Activated naive CD4-positive, alpha-beta T cell treated with anti-CD3 and anti-CD28 coated beads for 36 hours (primary cell): ENCODE measurements at regions of chr2 and their contacts with region 1.

Region 1: DNA sequence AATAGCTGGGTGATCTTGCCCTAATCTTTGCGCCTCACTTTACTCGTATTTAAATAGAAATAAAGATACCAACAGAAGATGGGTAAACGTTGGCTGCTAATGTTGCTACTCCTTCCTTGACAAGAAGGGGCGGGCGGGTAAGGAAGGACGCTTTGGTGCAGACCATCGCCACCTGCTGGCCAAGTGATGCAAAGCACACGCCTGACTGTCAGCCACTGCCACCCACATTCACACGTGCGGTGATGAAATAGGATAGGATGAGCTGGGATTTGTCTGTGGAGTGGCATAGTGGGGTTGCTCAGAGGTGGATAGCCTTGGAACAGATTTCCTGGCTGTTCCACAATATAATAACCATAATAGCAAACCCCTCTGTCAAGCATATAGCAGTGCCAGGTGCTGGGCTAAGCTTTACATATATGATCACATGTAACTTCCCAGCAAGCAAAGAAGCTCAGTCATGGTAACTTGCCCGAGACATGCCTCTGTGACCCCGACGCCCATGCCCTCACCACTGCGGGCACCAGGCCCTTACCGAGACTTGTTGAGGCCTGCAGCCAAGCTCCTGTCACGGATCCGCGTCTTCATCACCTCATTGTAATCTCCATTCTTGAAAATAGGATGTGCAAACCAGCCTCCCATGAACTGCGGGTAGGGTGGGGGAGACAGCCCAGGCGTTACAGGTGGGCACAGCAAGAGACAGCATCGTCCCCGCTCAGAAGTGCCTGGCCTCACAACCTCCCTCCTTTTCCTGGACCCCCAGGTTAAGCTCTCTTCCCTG is 39.3 kb downstream of the LCT start:
- DNase-seq: peak; percentile 91
- H3K4me3 Mint-ChIP-seq: no peak overlapping the region
- H3K27ac Mint-ChIP-seq: no peak overlapping the region
- H3K4me1 Mint-ChIP-seq: peaks cover 15% of the 10 kb centered on the region
- H3K27me3 Mint-ChIP-seq: no peaks in the 10 kb centered on the region

Region 2: DNA sequence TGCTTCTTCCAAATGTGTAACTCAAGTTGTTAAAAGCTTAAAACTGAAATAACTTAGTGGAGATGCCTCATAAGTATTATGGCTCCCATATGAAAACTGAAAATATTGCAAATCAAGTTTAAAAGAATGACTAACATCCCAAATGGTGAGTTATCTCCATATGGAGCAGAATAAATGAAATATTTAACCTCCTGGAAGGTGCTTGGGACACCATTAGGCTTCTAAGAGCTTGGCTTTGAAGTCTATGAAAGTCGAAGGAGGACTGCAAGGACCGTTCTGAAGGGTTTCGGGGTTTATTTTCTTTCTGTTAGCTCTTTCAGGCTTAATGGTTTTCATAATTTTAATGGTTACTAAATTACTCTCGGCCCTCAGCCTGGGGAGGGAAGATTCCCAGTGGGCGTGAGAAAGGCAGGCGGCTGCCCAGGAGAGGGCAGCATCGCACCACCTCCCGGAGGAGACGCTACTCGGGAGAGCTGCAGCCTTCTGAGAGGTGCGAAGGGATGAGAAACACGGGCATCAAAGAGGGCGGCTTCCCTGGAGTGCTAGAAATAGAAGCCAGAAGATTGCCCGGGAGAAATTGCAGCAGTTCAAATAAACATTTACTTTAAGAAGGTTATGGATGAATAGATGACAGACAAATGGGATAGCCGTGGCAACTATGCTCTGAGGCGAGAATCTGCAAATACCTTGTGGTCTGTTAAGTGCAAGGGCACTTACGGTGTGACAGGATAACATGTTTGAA is 793.5 kb before region 1 on chr2:
- CTCF ChIA-PET with region 1: interaction called, 9 read pairs
- intact Hi-C with region 1: loop called (anchors 1 kb)
- DNase-seq: peak; percentile 79
- H3K4me3 Mint-ChIP-seq: no peak overlapping the region
- H3K27ac Mint-ChIP-seq: no peak overlapping the region
- H3K4me1 Mint-ChIP-seq: peaks cover 5% of the 10 kb centered on the region
- H3K27me3 Mint-ChIP-seq: peaks cover 12% of the 10 kb centered on the region

Region 3: DNA sequence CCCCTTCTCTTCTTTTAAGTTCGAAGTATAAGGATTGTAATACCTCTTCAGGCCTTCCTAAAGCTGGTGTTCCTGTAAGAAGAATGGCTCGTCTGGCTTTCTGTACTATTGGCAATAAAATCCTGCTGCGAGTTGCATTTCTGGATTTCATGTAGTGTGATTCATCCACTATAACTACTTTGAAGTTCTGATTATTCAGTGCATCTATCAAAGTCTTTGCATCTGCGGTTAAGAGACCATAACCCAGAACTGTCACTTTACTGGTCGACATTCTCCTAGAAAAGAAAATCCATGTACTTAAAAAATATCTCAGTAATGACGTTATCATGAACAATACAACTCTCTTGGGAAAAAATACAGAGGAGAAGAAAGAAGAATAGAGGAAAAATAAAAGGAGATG is 447.7 kb before region 1 on chr2:
- CTCF ChIA-PET with region 1: no interaction called
- intact Hi-C with region 1: no loop called
- DNase-seq: no peak
- H3K4me3 Mint-ChIP-seq: no peak overlapping the region
- H3K27ac Mint-ChIP-seq: no peak overlapping the region
- H3K4me1 Mint-ChIP-seq: no peaks in the 10 kb centered on the region
- H3K27me3 Mint-ChIP-seq: no peaks in the 10 kb centered on the region

Region 4: GRCh38 chr2:135741395-135742324 is 56.0 kb before region 1 on chr2 and contains the start of gene UBXN4:
- CTCF ChIA-PET with region 1: interaction called, 11 read pairs
- intact Hi-C with region 1: loop called (anchors 1 kb)
- DNase-seq: peak; percentile 98
- H3K4me3 Mint-ChIP-seq: peak within 1 kb of the TSS; percentile 98
- H3K27ac Mint-ChIP-seq: peak within 1 kb of the TSS; percentile 99
- H3K4me1 Mint-ChIP-seq: peaks cover 30% of the 10 kb centered on the region
- H3K27me3 Mint-ChIP-seq: no peaks in the 10 kb centered on the region
- total RNA-seq, gene UBXN4: 100 to 105 TPM

Region 5: DNA sequence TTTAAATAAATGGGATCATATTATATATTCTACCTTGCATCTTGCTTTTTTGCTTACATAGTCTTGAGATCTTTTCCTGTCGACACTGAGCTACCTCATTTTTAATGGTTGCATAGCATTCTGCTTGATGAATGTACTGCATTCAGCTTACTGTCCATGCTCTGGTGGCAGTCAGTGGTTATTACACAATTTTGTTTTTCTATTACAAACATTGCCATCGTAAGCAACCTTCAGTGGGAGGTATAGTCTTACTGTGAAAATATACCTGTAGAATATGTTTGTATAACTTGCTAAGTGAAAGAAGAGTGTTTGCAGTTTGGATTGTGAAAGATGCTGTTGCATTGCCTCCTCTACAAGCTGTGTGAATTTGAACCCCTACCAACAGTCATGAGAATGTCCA is 12.7 kb before region 1 on chr2:
- CTCF ChIA-PET with region 1: interaction called, 63 read pairs
- intact Hi-C with region 1: no loop called
- DNase-seq: no peak
- H3K4me3 Mint-ChIP-seq: no peak overlapping the region
- H3K27ac Mint-ChIP-seq: no peak overlapping the region
- H3K4me1 Mint-ChIP-seq: no peaks in the 10 kb centered on the region
- H3K27me3 Mint-ChIP-seq: no peaks in the 10 kb centered on the region

Region 6: GRCh38 chr2:135825550-135826176 is 28.0 kb after region 1 on chr2:
- CTCF ChIA-PET with region 1: interaction called, 19 read pairs
- intact Hi-C with region 1: no loop called
- DNase-seq: no peak
- H3K4me3 Mint-ChIP-seq: no peak overlapping the region
- H3K27ac Mint-ChIP-seq: no peak overlapping the region
- H3K4me1 Mint-ChIP-seq: peaks cover 13% of the 10 kb centered on the region
- H3K27me3 Mint-ChIP-seq: no peaks in the 10 kb centered on the region